ENCODE measurements at regions of chr9 and their contacts with region 1.

Region 1: DNA sequence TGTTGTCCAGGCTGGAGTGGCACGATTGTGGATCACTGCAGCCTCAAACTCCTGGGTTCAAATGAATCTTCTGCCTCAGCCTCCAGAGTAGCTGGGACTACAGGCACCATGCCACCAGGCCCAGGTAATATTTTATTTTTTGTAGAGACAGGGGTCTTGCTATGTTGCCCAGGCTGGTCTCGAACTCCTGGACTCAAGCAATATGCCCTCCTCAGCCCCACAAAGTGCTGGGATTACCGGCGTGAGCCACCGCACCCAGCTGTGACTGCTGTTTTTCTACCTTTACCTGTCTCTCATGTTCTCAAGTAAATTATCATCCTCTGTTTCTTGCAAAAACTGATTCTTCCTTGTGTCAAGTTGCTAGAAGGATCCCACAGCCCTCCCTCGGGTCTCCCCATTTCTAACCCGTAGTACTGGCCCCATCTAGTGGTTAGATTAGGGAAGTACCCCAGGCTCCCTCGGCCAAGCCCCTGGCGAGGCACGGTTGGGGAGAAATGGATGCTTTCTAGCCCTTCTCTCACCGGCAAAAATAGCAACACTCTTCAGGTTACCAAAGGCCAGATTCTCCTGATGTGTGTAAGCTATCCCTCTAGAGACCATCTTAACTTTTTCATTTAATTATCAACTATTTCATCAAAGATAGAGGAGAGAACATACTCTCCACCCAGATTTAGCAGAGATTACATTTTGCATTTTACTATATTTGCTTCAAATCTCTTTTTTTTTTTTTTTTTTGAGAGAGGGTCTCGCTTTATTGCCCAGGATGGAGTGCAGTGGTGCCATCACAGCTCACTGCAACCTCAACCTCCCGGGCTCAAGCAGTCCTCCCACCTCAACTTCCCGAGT is 19.2 kb upstream of the TOR1B start:
- DNase-seq: peak; percentile 60
- H3K4me3 ChIP-seq: no peak overlapping the region
- H3K27ac ChIP-seq: no peak overlapping the region
- H3K4me1 ChIP-seq: no peaks in the 10 kb centered on the region
- H3K27me3 ChIP-seq: no peaks in the 10 kb centered on the region
- CTCF ChIP-seq: peak; percentile 82 to 92 (median 86)
- POLR2A ChIP-seq: no peak

Region 2: GRCh38 chr9:129131300-129132145 is 652.2 kb before region 1 on chr9:
- intact Hi-C with region 1: loop called (anchors 5 kb)
- DNase-seq: peak; percentile 54
- H3K4me3 ChIP-seq: no peak overlapping the region
- H3K27ac ChIP-seq: peak overlapping the region in 1 of 2 donors; percentile 38
- H3K4me1 ChIP-seq: no peaks in the 10 kb centered on the region
- H3K27me3 ChIP-seq: no peaks in the 10 kb centered on the region
- CTCF ChIP-seq: peak; percentile 89 to 97 (median 94)
- POLR2A ChIP-seq: no peak

Region 3: GRCh38 chr9:129641746-129642513 is 141.8 kb before region 1 on chr9 and contains the start of gene ASB6:
- intact Hi-C with region 1: loop called (anchors 2 kb)
- DNase-seq: peak; percentile 92
- H3K4me3 ChIP-seq: peak within 1 kb of the TSS; percentile 83 to 93
- H3K27ac ChIP-seq: peak within 1 kb of the TSS; percentile 79
- H3K4me1 ChIP-seq: peaks cover 15% of the 10 kb centered on the region
- H3K27me3 ChIP-seq: no peaks in the 10 kb centered on the region
- CTCF ChIP-seq: peak; percentile 99 to 100 (median 100)
- POLR2A ChIP-seq: peak; percentile 50
- total RNA-seq, gene ASB6: 25.2 to 50.3 TPM

Region 4: DNA sequence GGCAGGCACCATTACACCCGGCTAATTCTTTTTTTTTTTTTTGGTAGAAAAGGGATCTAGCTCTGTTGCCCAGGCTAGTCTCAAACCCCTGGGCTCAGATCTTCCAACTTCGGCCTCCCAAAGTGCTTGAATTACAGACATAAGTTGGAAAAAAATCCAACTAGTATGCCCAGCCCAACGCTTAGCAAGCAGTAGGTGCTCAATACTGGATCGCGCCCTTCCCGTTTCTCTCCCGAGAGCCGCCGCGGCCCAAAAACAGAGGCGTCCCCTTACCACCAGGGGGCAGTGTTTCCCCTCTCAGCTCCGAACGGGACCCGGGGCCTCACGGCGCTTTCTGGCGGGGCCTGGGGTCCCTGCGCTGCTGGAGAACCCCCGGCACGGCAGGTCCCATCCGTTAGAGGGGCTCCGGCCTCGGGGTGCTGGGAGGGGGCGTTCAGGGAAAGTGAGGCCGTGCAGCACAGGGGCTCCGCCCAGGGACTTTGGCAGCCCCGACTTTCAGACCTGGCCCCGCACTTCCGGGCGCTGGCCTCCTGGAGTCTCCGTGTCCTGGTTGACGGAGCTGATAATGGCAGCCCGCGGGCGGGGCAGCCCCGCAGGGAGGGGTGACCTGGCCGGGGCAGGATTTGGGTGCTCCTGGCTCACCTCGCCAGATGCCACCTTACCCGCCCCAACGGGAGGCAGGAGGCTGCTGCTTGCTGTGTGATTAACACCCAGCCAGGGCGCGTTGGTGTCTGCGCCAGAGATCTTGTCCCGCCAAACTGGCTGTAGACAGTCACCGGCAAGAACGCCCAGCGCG is 46.1 kb before region 1 on chr9:
- intact Hi-C with region 1: loop called (anchors 2 kb)
- DNase-seq: peak; percentile 83
- H3K4me3 ChIP-seq: peak overlapping the region; percentile 44 to 52
- H3K27ac ChIP-seq: peak overlapping the region; percentile 81 to 84
- H3K4me1 ChIP-seq: no peaks in the 10 kb centered on the region
- H3K27me3 ChIP-seq: no peaks in the 10 kb centered on the region
- CTCF ChIP-seq: peak; percentile 97 to 99 (median 98)
- POLR2A ChIP-seq: no peak

Region 5: DNA sequence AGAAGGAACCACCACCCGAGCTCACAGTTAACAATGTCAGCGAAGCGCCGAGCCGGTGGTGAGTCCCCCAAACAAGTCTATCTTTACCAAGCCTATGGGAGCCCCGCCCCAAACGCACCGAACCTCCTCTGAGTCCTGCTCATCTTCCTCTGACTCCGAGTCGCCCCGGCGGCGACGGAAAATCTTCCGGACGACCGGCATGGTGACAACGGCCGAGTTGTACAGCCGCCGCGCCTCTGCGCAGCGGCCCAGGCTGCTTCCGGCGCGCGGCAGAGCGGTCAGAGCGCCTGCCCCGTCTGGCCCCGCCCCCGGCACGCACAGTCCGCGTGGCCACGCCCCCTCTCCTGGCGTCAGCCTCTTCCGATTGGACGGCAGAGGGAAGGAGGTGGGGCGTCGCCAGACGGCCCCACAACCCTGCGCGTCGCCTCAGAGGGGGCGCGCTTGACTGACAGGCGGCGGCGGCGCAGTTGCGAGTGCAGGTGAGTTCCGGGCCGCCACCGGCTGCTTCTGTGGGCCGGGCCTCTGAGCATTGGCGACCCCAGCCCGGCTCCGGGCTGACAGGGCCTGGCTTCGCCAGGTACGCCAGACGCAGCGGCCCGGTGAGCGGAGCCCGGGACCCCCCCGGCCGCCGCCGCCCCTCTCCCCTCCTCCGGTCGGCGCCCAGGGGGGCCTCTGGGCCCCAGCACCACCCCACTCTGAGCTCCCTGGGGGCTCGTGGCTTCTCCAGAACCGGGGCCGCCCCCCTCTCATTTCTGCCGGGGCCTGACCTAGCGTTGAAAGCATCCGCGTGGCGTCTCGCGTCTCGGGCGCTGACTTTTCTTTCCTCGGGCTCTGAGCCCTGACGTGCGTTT is 51.5 kb after region 1 on chr9 and contains the starts of genes C9orf78 and USP20:
- intact Hi-C with region 1: no loop called
- DNase-seq: peak; percentile 96
- H3K4me3 ChIP-seq: peak within 1 kb of the TSS; percentile 97 to 99
- H3K27ac ChIP-seq: peak within 1 kb of the TSS; percentile 84 to 90
- H3K4me1 ChIP-seq: no peaks in the 10 kb centered on the region
- H3K27me3 ChIP-seq: no peaks in the 10 kb centered on the region
- CTCF ChIP-seq: peak in 2 of 4 experiments; percentile 8 to 18
- POLR2A ChIP-seq: peak; percentile 89
- total RNA-seq, gene C9orf78: 63.7 to 76.8 TPM
- total RNA-seq, gene USP20: 34.8 to 53.5 TPM

Measured in prostate gland (tissue), 2 donors.